PC-9 (cell line): ENCODE measurements at regions of chr2 and their contacts with region 1.

Region 1: DNA sequence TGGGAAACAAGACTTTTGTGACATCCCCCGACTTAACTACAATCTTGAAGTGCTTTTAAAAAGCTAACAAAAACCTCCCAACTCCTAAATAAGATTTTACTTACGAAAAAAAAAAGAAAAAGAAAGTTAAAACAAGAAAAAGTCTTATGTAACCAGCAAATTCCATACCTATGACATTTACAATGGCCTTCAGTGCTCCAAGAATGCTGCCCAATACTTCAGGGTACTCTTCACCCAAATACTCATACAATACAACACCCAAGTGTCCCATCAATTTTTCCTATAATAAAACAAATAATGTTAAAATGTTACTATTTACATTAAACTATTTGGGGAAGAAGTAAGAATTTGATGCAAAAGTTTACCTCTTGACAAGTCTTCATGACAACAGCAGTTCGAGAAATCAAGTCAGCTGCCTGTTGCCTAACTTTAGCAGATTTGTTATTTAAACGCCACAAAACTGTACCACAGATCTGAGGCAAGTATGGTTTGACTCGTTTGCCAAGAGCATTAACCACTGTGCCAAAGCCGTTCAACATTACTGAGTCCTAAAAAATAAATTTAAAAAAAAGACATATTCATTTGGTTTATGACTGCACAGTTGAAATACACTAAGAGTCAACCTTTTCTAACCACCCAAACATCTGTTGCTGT is 34.8 kb downstream of the SF3B1 start:
- DNase-seq: no peak
- H3K4me3 ChIP-seq: no peak overlapping the region
- H3K27ac ChIP-seq: no peak overlapping the region
- H3K4me1 ChIP-seq: no peaks in the 10 kb centered on the region
- H3K27me3 ChIP-seq: no peaks in the 10 kb centered on the region
- CTCF ChIP-seq: no peak

Region 2: DNA sequence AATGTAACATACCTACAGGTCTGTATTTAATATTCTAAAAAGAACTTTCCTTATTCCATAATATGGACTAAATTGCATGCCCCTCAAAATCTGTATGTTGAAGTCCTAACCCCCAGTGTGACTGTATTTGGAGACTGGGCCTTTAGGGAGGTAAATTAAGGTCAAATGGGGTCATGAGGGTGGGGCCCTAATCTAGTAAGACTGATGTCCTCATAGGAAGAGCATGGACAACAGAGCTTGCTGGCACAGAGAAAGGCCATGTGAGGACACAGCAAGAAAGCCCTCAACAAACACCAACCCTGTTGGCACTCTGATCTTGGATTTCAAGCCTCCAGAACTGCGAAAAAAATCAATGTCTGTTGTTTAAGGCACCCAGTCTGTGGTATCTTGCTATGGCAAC is 16.3 kb after region 1 on chr2:
- CTCF ChIA-PET with region 1: no interaction called
- POLR2A ChIA-PET with region 1: interaction called, 5 read pairs
- intact Hi-C with region 1: loop called (anchors 2 kb)
- DNase-seq: no peak
- H3K4me3 ChIP-seq: no peak overlapping the region
- H3K27ac ChIP-seq: no peak overlapping the region
- H3K4me1 ChIP-seq: no peaks in the 10 kb centered on the region
- H3K27me3 ChIP-seq: no peaks in the 10 kb centered on the region
- CTCF ChIP-seq: no peak